ENCODE measurements at regions of chr19 and their contacts with region 1.

Region 1: DNA sequence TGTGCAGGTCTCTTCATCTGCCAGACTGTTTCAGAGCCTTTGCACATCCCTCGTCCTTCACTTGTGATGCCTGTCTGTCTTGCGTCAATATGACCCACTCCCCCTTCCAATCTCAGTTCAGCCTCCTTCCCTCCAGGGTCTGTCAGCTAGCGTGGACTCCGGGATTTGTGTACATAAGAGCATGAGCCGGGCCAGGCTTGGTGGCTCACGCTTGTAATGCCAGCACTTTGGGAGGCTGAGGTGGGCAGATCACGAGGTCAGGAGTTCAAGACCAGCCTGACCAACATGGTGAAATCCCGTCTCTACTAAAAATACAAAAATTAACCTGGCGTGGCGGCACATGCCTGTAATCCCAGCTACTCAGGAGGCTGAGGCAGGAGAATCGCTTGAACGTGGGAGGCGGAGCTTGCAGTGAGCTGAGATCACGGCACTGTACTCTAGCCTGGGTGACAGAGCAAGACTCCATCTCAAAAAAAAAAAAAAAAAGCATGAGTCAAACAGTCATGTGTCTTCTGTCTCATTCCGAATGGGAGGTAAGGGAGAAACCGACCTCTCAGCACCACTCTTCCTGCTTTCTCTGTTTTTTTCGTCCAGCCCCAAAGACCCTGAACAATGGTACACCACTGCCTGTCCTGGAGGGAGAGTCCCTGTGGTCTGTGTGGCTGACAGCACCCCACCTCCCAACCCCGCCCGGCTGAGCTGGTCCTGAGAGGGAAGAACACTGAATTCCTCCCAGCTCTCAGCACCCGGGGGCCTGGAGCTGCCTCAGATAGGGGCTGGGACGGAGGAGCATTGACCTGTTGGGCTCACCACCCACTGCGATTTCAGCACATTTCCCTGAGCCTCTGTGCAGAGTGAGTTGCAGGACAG is 2.4 kb upstream of the SIGLEC9 start:
- DNase-seq: no peak
- H3K4me3 ChIP-seq: no peak overlapping the region
- H3K27ac ChIP-seq: no peak overlapping the region
- H3K4me1 ChIP-seq: no peaks in the 10 kb centered on the region
- H3K27me3 ChIP-seq: peaks cover 97% of the 10 kb centered on the region
- CTCF ChIP-seq: no peak

Region 2: DNA sequence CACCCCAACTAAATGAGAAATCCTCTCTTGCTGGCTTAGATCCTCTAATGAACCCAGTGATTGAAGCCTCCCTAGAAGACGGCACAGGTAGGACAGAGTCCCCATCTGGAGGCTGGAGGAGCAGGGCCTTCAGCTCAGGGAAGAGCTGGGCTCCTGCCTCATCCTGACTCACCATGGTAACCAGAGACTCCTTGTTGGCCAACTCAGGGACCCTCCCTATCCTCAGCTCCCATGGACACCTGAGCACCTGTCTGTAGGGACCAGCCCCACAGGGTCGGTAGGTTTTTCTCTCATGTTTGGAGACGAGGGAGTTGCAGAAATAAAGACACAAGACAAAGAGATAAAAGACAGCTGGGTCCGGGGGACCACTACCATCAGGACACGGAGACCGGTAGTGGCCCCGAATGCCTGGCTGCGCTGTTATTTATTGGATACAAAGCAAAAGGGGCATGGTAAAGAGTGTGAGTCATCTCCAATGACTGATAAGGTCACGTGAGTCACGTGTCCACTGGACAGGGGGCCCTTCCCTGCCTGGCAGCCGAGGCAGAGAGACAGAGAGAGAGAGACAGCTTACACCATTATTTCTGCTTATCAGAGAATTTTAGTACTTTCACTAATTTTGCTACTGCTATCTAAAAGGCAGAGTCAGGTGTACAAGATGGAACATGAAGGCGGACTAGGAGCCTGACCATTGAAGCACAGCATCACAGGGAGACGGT is 46.4 kb after region 1 on chr19:
- CTCF ChIA-PET with region 1: no interaction called
- POLR2A ChIA-PET with region 1: no interaction called
- intact Hi-C with region 1: no loop called
- DNase-seq: no peak
- H3K4me3 ChIP-seq: no peak overlapping the region
- H3K27ac ChIP-seq: no peak overlapping the region
- H3K4me1 ChIP-seq: no peaks in the 10 kb centered on the region
- H3K27me3 ChIP-seq: peaks cover 81% of the 10 kb centered on the region
- CTCF ChIP-seq: no peak

Region 3: DNA sequence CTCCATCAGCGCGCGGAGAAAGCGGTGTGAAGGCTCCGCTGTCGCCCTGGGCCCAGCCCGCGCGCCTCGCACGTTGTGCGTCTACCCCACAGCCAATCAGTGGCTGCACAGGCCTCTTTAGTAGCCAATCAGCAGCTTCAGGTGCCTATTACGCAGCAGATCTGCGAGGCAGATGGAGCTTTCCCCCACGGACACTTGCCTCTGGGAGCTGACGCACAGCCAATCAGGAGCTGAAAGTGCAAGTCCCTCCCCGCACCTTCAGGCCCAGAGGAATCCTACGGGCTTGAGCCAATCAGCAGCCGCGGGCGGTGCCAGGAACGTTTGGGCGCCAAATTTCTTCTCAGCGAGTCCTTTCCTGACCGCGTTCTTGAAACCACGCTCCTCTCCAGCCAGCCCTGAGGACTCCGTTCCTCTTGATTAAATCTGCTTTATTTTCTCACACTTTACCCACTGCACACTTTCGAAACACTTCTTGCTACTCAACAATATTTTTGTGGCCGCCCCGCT is 59.6 kb after region 1 on chr19:
- CTCF ChIA-PET with region 1: no interaction called
- POLR2A ChIA-PET with region 1: no interaction called
- intact Hi-C with region 1: no loop called
- DNase-seq: no peak
- H3K4me3 ChIP-seq: no peak overlapping the region
- H3K27ac ChIP-seq: no peak overlapping the region
- H3K4me1 ChIP-seq: no peaks in the 10 kb centered on the region
- H3K27me3 ChIP-seq: peaks cover 81% of the 10 kb centered on the region
- CTCF ChIP-seq: no peak

Region 4: DNA sequence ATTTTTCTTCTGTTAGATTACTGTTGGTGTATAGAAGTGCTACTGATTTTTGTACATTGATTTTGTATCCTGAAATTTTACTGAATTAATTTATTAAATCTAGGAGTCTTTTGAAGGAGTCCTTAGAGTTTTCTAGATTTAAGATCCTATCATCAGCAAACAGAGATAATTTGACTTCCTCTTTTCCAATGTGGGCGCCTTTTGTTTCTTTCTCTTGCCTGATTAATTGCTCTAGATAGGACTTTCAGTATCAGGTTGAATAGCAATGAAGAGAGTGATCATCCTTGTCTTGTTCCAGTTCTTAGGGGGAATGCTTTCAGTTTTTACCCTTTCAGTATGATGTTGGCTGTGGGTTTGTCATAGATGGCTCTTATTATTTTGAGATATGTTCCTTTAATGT is 97.0 kb after region 1 on chr19:
- CTCF ChIA-PET with region 1: no interaction called
- POLR2A ChIA-PET with region 1: no interaction called
- intact Hi-C with region 1: no loop called
- DNase-seq: no peak
- H3K4me3 ChIP-seq: no peak overlapping the region
- H3K27ac ChIP-seq: no peak overlapping the region
- H3K4me1 ChIP-seq: no peaks in the 10 kb centered on the region
- H3K27me3 ChIP-seq: peaks cover 69% of the 10 kb centered on the region
- CTCF ChIP-seq: no peak

Region 5: GRCh38 chr19:52428937-52429336 is 1306.6 kb after region 1 on chr19 and contains the start of gene ZNF534:
- CTCF ChIA-PET with region 1: interaction called, 12 read pairs
- POLR2A ChIA-PET with region 1: no interaction called
- intact Hi-C with region 1: no loop called
- DNase-seq: no peak
- H3K4me3 ChIP-seq: no peak within 1 kb of the TSS
- H3K27ac ChIP-seq: no peak within 1 kb of the TSS
- H3K4me1 ChIP-seq: no peaks in the 10 kb centered on the region
- H3K27me3 ChIP-seq: no peaks in the 10 kb centered on the region; the same call in 1 of the 2 replicates
- CTCF ChIP-seq: no peak
- total RNA-seq, gene ZNF534: not detected in 2 replicates